A549 (cell line): ENCODE measurements at regions of chr15 and their contacts with region 1.

Region 1: GRCh38 chr15:70097337-70098169 is at the start of gene TLE3:
- DNase-seq: peak; percentile 98 to 100
- ATAC-seq: peak; percentile 64 to 80
- H3K4me3 ChIP-seq: peak within 1 kb of the TSS; percentile 72
- H3K27ac ChIP-seq: peak within 1 kb of the TSS; percentile 87 to 91
- H3K4me1 ChIP-seq: peaks cover 46% of the 10 kb centered on the region
- CTCF ChIP-seq: peak; percentile 47
- EP300 ChIP-seq: no peak
- POLR2A ChIP-seq: peak; percentile 83
- RAD21 ChIP-seq: peak; percentile 61 to 77
- polyA plus RNA-seq, gene TLE3: 4.6 and 6.6 TPM in 2 replicates

Region 2: GRCh38 chr15:69576035-69576526 is 521.5 kb before region 1 on chr15:
- CTCF ChIA-PET with region 1: interaction called, 27 read pairs
- POLR2A ChIA-PET with region 1: interaction called, 7 read pairs
- DNase-seq: peak; percentile 68 to 87
- ATAC-seq: peak; percentile 79 to 92
- H3K4me3 ChIP-seq: no peak overlapping the region
- H3K27ac ChIP-seq: peak overlapping the region; percentile 28 to 50; a peak in 4 of 6 replicates
- H3K4me1 ChIP-seq: peaks cover 37% of the 10 kb centered on the region; the same call in 2 of the 3 replicates
- CTCF ChIP-seq: peak; percentile 94
- EP300 ChIP-seq: no peak
- POLR2A ChIP-seq: no peak
- RAD21 ChIP-seq: peak; percentile 98

Region 3: GRCh38 chr15:69593981-69594966 is 503.3 kb before region 1 on chr15:
- CTCF ChIA-PET with region 1: interaction called, 9 read pairs
- POLR2A ChIA-PET with region 1: interaction called, 12 read pairs
- DNase-seq: peak; percentile 89 to 98
- ATAC-seq: peak; percentile 86 to 90
- H3K4me3 ChIP-seq: peak overlapping the region; percentile 17; the same call in 1 of the 3 replicates
- H3K27ac ChIP-seq: peak overlapping the region; percentile 63 to 73
- H3K4me1 ChIP-seq: peaks cover 50% of the 10 kb centered on the region
- CTCF ChIP-seq: no peak
- EP300 ChIP-seq: peak; percentile 53 to 69; a peak in 2 of 5 replicates
- POLR2A ChIP-seq: no peak
- RAD21 ChIP-seq: peak in 1 of 2 experiments; percentile 49; a peak in 3 of 5 replicates

Region 4: GRCh38 chr15:70111203-70112073 is 13.9 kb after region 1 on chr15:
- CTCF ChIA-PET with region 1: interaction called, 11 read pairs
- POLR2A ChIA-PET with region 1: interaction called, 10 read pairs
- DNase-seq: peak; percentile 72 to 75
- ATAC-seq: peak; percentile 68 to 91
- H3K4me3 ChIP-seq: no peak overlapping the region
- H3K27ac ChIP-seq: peak overlapping the region; percentile 64 to 79; a peak in 5 of 6 replicates
- H3K4me1 ChIP-seq: peaks cover 8% of the 10 kb centered on the region
- CTCF ChIP-seq: no peak
- EP300 ChIP-seq: no peak
- POLR2A ChIP-seq: no peak
- RAD21 ChIP-seq: 0 out of 5 replicates have a peak, but pooled peaks of 1 of the 2 experiments have one; percentile 19

Region 5: GRCh38 chr15:70512772-70513362 is 415.3 kb after region 1 on chr15:
- CTCF ChIA-PET with region 1: interaction called, 3 read pairs
- POLR2A ChIA-PET with region 1: interaction called, 10 read pairs
- DNase-seq: peak; percentile 67 to 90
- ATAC-seq: peak in 1 of 2 experiments; percentile 33; a peak in 3 of 6 replicates
- H3K4me3 ChIP-seq: no peak overlapping the region
- H3K27ac ChIP-seq: peak overlapping the region in 1 of 2 experiments; percentile 4; a peak in 1 of 6 replicates
- H3K4me1 ChIP-seq: peaks cover 20% of the 10 kb centered on the region
- CTCF ChIP-seq: peak; percentile 70
- EP300 ChIP-seq: no peak
- POLR2A ChIP-seq: no peak
- RAD21 ChIP-seq: peak; percentile 83 to 96